Activated naive CD8-positive, alpha-beta T cell treated with anti-CD3 and anti-CD28 coated beads, Interleukin-2, amount 10 ng/mL, durations not matched to agents 7 days and 5 days (primary cell): ENCODE measurements at regions of chrX and their contacts with region 1.

Region 1: DNA sequence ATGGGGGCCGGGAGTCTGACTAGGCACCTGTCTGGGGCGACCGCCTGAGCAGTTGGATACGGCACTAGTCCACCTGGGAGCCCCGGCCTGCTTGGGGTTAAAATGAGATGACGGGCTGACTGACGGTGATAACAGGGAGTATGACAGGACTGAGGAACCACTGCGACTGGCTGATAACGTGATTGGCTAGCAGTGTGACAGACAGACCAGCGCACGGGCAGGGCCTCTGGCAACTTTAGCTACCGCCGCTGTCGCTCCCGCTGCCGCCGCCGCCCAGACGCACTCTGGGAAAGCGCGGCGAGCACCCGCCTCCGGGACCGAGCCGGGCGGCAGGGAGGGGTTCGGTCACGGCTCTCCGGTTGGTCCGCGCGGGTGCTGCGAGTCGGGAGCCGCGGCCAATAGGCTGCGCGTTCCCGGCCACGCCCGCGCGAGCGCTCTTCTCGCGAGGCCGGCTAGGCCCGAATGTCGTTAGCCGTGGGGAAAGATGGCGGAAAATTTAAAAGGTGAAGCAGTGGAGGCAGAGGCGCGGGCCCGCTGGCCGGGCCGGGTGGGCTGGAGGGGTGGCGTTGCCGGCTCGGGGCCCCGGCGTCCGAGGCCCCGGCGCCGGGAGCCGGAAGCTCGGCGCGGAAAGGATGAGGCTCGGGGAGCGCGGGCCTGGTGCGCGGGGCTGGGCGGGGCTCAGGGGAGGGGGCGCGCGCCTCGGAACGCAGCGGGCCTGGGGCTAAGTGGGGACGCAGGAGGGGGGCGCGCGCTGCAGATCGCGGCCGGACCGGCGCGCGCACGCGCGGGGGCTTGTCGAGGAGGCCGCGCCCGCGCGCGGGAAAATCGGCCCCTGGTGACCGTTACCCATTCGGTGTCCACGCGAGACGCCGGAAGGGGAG is at the start of gene SUV39H1:
- DNase-seq: peak; percentile 87
- ATAC-seq: peak; percentile 96
- H3K4me3 Mint-ChIP-seq: peak within 1 kb of the TSS; percentile 96
- H3K27ac Mint-ChIP-seq: peak within 1 kb of the TSS; percentile 98
- H3K4me1 Mint-ChIP-seq: peaks cover 16% of the 10 kb centered on the region
- H3K27me3 Mint-ChIP-seq: no peaks in the 10 kb centered on the region
- total RNA-seq, gene SUV39H1: 25.4 to 26.8 TPM

Region 2: DNA sequence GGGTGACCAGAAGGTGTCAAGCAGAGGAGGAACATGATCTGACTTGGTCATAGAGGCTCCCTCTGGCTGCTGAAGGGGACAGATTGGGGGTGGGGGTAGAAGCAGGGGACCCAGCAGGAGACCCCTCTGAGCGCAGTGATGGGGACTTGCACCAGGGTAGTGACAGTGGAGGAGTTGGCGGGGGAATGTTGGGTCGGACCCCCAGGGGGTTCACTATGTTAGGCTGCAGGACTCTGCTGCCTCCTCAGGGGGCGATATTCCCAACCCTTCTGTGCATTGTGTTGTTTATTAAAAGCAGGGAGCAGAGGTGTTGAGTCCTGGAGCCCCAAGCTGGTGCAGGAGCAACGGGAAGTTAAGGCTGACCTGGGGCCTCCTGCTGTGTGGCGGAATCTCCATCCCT is 90.5 kb before region 1 on chrX:
- POLR2A ChIA-PET with region 1: no interaction called
- DNase-seq: no peak
- ATAC-seq: no peak
- H3K4me3 Mint-ChIP-seq: no peak overlapping the region
- H3K27ac Mint-ChIP-seq: no peak overlapping the region
- H3K4me1 Mint-ChIP-seq: no peaks in the 10 kb centered on the region
- H3K27me3 Mint-ChIP-seq: no peaks in the 10 kb centered on the region

Region 3: DNA sequence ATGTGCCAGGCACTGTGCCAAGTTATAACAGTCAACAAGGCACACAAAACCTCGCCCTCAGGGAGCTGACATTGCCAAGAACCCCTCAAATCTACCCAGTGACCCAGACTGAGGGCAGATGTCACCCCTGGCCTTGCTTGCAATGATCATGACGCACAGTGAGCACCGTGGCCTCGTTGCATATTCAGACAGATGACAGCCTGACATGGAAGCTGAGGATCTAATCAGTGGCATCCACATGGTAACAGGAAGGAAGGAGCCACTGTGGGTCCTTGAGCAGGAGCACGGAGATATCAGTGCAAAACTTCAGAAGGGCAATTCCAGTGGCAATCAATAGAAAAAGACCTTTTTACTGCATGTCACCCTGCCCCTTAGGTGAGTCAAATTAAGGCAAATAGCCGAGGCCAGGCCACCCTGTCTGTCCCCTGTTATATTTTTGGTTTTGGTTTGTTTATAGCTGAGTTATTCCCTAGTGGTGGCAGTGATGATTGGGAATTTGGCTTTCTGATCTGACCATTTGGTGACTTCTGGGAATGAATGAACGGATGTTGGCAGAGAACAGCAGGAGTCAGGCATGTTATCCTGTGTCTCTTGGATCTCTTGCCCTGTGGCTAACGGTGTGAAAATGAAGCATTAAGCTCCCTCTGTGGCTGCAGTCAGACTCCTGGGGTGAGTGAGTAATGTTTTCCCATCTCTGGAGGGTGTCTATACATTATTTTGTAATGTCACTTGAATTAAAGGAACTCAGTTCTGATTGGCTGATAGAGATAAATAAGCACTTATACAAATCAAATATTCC is 78.8 kb before region 1 on chrX:
- POLR2A ChIA-PET with region 1: no interaction called
- DNase-seq: no peak
- ATAC-seq: no peak
- H3K4me3 Mint-ChIP-seq: no peak overlapping the region
- H3K27ac Mint-ChIP-seq: no peak overlapping the region
- H3K4me1 Mint-ChIP-seq: no peaks in the 10 kb centered on the region
- H3K27me3 Mint-ChIP-seq: no peaks in the 10 kb centered on the region

Region 4: GRCh38 chrX:48676106-48676892 is 20.2 kb before region 1 on chrX:
- POLR2A ChIA-PET with region 1: interaction called, 22 read pairs
- DNase-seq: peak; percentile 90
- ATAC-seq: peak; percentile 94
- H3K4me3 Mint-ChIP-seq: peak overlapping the region; percentile 93
- H3K27ac Mint-ChIP-seq: peak overlapping the region; percentile 92
- H3K4me1 Mint-ChIP-seq: peaks cover 23% of the 10 kb centered on the region
- H3K27me3 Mint-ChIP-seq: no peaks in the 10 kb centered on the region

Region 5: GRCh38 chrX:48683411-48683982 is 13.0 kb before region 1 on chrX and contains the start of gene WAS:
- POLR2A ChIA-PET with region 1: interaction called, 25 read pairs
- DNase-seq: peak; percentile 62
- ATAC-seq: peak; percentile 93
- H3K4me3 Mint-ChIP-seq: peak within 1 kb of the TSS; percentile 99
- H3K27ac Mint-ChIP-seq: peak within 1 kb of the TSS; percentile 98
- H3K4me1 Mint-ChIP-seq: peaks cover 47% of the 10 kb centered on the region
- H3K27me3 Mint-ChIP-seq: no peaks in the 10 kb centered on the region
- total RNA-seq, gene WAS: 142 to 146 TPM

Region 6: DNA sequence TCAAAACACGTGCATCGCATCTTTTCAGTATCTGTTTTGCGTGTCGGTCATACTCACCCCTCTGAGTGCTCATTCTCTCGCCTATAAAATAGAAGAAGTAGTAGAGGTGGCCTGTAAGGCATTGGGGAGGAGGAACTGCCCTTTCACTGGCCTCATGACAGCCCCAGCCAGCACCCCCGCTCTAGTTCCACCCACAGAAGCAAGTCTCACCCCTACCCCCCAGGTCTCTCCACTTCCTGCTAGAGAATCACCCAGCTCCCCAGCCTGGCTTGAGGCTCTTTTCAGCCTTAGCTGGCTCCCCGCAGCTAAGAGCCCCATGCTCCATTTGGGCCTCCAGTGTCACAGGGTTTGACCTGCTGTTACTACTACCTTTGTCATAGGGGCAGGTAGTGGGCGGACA is 117.1 kb after region 1 on chrX:
- POLR2A ChIA-PET with region 1: no interaction called
- DNase-seq: no peak
- ATAC-seq: no peak
- H3K4me3 Mint-ChIP-seq: no peak overlapping the region
- H3K27ac Mint-ChIP-seq: no peak overlapping the region
- H3K4me1 Mint-ChIP-seq: peaks cover 1% of the 10 kb centered on the region
- H3K27me3 Mint-ChIP-seq: no peaks in the 10 kb centered on the region